Right cardiac atrium (tissue), 5 donors: ENCODE measurements at regions of chr4 and their contacts with region 1.

Region 1: DNA sequence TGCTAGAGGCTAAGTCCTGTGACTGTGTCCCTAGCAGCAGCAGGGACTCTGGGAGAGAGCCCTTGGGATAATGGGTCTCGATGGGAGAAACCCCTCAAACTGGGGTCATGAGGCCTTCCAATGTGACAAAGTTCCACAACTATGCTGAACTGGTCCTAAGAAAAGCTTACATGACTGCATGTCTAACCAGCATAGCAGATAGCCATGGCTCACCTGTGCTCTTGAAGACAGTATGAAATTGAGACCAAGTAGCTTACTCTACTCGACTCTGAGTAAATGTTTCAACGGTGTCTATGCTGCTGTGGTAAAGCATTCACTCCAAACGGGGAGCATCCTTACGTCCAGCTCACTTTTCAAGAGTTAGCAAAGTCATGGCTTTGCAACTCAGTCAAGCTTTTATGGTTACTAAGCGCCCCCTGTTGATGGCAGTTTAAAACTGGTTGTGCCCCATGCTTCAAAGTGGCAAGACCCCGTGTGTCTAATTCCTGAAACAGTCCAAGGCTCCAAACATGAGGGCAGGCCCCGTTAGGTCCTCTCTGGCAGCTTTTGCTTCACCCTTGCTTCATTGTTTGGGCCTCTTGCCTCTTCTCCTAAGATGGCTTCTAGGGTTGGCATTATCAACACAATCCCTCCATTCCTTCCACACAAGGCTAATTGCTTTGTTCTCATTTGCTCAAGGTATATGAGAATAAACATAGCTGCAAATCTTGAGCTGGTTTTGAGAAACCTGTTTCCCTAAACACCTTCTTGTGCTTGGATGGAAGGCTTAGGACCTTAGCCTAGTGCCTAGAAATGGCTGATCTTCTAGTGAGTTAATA is 46.6 kb downstream of the CCNG2 start:
- DNase-seq: peak; percentile 32 to 51 (median 49)
- ATAC-seq: peak; percentile 73 to 81
- H3K4me3 ChIP-seq: no peak overlapping the region
- H3K27ac ChIP-seq: no peak overlapping the region
- H3K4me1 ChIP-seq: no peaks in the 10 kb centered on the region
- H3K27me3 ChIP-seq: no peaks in the 10 kb centered on the region

Region 2: GRCh38 chr4:76526585-76526990 is 677.0 kb before region 1 on chr4:
- intact Hi-C with region 1: loop called in 1 of 4 experiments (anchors 10 kb)
- DNase-seq: no peak
- ATAC-seq: peak; percentile 88 to 93
- H3K4me3 ChIP-seq: no peak overlapping the region
- H3K27ac ChIP-seq: peak overlapping the region; percentile 83
- H3K4me1 ChIP-seq: peaks cover 4% of the 10 kb centered on the region
- H3K27me3 ChIP-seq: no peaks in the 10 kb centered on the region

Region 3: GRCh38 chr4:77052352-77052751 is 151.2 kb before region 1 on chr4:
- intact Hi-C with region 1: loop called in 1 of 4 experiments (anchors 5 kb)
- DNase-seq: peak in 1 of 3 donors; percentile 62
- ATAC-seq: peak; percentile 29 to 36
- H3K4me3 ChIP-seq: no peak overlapping the region
- H3K27ac ChIP-seq: no peak overlapping the region
- H3K4me1 ChIP-seq: no peaks in the 10 kb centered on the region
- H3K27me3 ChIP-seq: no peaks in the 10 kb centered on the region

Region 4: GRCh38 chr4:77095101-77095821 is 108.3 kb before region 1 on chr4:
- intact Hi-C with region 1: loop called in 2 of 4 experiments (anchors 5 kb)
- DNase-seq: peak; percentile 75 to 93 (median 86)
- ATAC-seq: peak; percentile 94 to 95
- H3K4me3 ChIP-seq: no peak overlapping the region
- H3K27ac ChIP-seq: no peak overlapping the region
- H3K4me1 ChIP-seq: no peaks in the 10 kb centered on the region
- H3K27me3 ChIP-seq: no peaks in the 10 kb centered on the region